CD4-positive, alpha-beta memory T cell (primary cell): ENCODE measurements at regions of chr18 and their contacts with region 1.

Region 1: GRCh38 chr18:51051105-51051712 is 21.2 kb downstream of the SMAD4 start:
- DNase-seq: peak; percentile 54 to 66 (median 59)
- H3K4me3 ChIP-seq: no peak overlapping the region
- H3K4me3 Mint-ChIP-seq: peak overlapping the region in 1 of 8 donors; percentile 36
- H3K27ac ChIP-seq: no peak overlapping the region
- H3K27ac Mint-ChIP-seq: peak overlapping the region in 6 of 7 donors; percentile 2 to 71 (median 52)
- H3K4me1 ChIP-seq: peaks cover 16% of the 10 kb centered on the region
- H3K4me1 Mint-ChIP-seq: peaks cover 21 to 36% (median 31%) of the 10 kb centered on the region in 4 donors
- H3K27me3 ChIP-seq: no peaks in the 10 kb centered on the region
- H3K27me3 Mint-ChIP-seq: no peaks in the 10 kb centered on the region

Region 2: DNA sequence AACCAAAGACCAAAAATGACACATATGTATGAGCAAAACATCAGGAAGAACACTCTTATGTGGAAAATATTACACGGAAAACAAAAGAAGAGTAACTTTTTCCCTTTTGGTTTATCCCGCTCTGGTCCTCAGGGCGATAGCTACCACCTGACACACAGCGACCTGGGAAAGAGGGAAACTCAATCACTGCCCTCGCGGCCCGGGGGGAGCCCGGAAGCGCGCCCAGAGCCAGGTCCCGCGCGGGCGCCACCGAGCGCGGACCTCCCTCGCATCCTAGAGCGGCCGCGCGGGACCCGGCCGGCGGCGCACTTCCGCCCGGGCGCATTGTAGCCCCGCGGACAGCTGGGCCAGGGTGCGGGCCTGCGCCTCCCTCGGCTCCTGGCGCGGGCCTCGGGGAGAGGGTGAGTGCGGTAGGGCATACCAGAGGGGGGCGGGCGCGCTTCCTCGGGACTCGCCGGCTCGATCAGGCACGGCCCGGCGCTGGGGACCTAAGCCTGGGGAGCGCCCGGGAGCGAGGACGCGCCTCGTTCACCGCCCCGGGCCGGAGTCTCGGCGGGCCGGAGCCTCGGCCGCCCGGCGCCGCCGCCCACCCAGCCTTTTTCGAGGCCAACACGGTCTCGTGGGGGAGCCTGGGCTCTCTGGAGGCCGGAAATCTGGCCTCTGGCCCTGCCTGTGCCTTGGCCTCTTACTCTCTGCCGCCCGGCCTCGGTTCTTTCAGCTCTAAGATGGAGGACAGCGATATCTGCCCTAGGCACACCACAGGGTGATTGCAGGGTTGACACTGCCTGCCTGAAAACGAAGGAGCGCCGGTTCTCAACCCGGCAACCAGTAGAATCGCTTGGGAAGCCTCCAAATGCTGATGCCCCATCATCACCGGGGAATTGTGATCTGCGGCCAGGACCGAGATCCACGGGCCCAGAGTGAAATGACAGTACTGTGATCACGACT is 83.2 kb before region 1 on chr18 and contains the start of gene ELAC1:
- CTCF ChIA-PET with region 1: interaction called, 4 read pairs
- POLR2A ChIA-PET with region 1: interaction called, 4 read pairs
- intact Hi-C with region 1: loop called (anchors 5 kb)
- DNase-seq: peak; percentile 67 to 76 (median 68)
- H3K4me3 ChIP-seq: peak within 1 kb of the TSS; percentile 77 to 88
- H3K4me3 Mint-ChIP-seq: peak within 1 kb of the TSS; percentile 95 to 99 (median 96)
- H3K27ac ChIP-seq: peak within 1 kb of the TSS; percentile 81
- H3K27ac Mint-ChIP-seq: peak within 1 kb of the TSS; percentile 90 to 98 (median 96)
- H3K4me1 ChIP-seq: peaks cover 25% of the 10 kb centered on the region
- H3K4me1 Mint-ChIP-seq: peaks cover 18 to 29% (median 21%) of the 10 kb centered on the region in 4 donors
- H3K27me3 ChIP-seq: no peaks in the 10 kb centered on the region
- H3K27me3 Mint-ChIP-seq: peaks cover 0 to 3% of the 10 kb centered on the region in 2 donors
- total RNA-seq, gene ELAC1: 11.6 to 11.7 TPM

Region 3: DNA sequence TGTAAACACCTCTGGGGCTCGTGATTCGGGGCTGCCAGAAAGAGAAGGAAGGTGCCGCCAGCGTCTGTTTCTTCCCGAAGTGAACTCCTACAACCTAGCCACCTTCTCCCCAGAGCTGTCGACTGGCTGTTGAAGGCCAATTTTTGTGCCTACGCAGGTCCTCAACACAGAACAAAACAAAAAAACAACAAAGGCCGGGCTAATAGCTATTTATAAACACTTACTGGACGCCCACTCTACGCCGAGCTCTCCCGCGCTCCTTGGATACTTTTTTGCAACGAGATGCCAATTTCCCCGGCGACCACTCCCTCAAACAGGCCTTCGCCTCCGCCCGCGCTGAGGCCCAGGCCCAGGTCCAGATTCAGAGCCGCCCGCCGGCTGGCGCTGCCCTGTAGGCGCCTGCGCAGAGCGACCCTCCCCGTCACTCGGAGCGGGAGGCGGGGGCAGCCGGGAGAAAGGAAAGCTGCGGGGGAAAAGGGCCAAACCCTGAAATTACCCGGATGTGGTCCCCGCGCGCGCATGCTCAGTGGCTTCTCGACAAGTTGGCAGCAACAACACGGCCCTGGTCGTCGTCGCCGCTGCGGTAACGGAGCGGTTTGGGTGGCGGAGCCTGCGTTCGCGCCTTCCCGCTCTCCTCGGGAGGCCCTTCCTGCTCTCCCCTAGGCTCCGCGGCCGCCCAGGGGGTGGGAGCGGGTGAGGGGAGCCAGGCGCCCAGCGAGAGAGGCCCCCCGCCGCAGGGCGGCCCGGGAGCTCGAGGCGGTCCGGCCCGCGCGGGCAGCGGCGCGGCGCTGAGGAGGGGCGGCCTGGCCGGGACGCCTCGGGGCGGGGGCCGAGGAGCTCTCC is 21.3 kb before region 1 on chr18 and contains the start of gene SMAD4:
- CTCF ChIA-PET with region 1: interaction called, 26 read pairs
- POLR2A ChIA-PET with region 1: interaction called, 9 read pairs
- intact Hi-C with region 1: loop called (anchors 1 kb)
- DNase-seq: peak; percentile 96 to 98 (median 97)
- H3K4me3 ChIP-seq: peak within 1 kb of the TSS; percentile 47 to 53
- H3K4me3 Mint-ChIP-seq: peak within 1 kb of the TSS; percentile 95 to 100 (median 98)
- H3K27ac ChIP-seq: peak within 1 kb of the TSS; percentile 83
- H3K27ac Mint-ChIP-seq: peak within 1 kb of the TSS; percentile 98 to 99 (median 99)
- H3K4me1 ChIP-seq: peaks cover 80% of the 10 kb centered on the region
- H3K4me1 Mint-ChIP-seq: peaks cover 39 to 63% (median 48%) of the 10 kb centered on the region in 4 donors
- H3K27me3 ChIP-seq: no peaks in the 10 kb centered on the region
- H3K27me3 Mint-ChIP-seq: no peaks in the 10 kb centered on the region
- total RNA-seq, gene SMAD4: 143 to 155 TPM

Region 4: DNA sequence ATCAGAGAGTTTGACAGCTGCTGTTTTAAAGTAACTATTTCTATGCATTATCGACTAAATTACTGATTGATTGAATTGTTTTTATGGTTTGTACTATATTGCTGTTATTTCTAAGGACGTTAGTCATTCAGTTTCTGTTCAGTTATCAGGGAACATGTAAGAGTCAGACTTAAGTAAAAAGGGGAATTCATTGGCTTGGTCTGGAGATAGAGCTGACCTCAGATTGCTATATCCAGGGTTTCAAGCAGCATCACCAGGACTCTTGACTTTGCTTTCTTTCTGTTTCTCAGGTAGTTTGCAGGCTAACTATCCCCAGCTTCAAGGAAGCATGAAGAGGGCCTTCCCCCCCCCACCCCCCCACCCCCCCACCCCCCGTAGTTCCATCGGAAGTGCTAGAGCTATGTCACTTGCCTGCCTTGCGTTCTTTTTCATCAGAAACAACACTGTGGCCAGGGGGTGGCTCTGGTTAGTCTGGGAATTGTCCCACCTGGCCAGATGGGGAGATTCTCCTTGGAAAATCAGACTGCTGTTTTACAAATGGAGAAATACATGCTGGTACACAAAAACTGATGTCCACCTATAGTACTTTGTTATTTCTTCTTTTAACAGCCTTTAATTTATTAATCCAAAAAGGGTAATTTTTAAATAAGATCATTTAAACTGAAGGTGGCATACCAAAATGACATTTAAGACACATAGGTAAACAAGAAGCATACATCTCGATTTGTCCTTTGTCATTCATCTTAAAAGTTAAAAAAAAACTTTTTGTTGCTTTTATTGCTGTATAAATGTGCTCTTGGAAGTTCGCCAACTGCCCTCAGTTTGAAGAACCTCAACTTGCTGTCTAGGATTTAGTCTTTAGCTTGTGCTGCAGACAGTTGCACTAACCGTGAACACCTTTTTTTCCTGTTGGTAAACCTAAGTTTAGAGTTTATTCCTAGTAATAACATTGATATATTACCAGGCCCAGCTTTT is 11.8 kb before region 1 on chr18:
- CTCF ChIA-PET with region 1: interaction called, 21 read pairs
- POLR2A ChIA-PET with region 1: interaction called, 5 read pairs
- intact Hi-C with region 1: no loop called
- DNase-seq: peak in 2 of 5 donors; percentile 13 to 36
- H3K4me3 ChIP-seq: no peak overlapping the region
- H3K4me3 Mint-ChIP-seq: peak overlapping the region in 6 of 8 donors; percentile 19 to 69 (median 56)
- H3K27ac ChIP-seq: no peak overlapping the region
- H3K27ac Mint-ChIP-seq: peak overlapping the region in 6 of 7 donors; percentile 6 to 68 (median 50)
- H3K4me1 ChIP-seq: peaks cover 92% of the 10 kb centered on the region
- H3K4me1 Mint-ChIP-seq: peaks cover 70 to 99% (median 84%) of the 10 kb centered on the region in 4 donors
- H3K27me3 ChIP-seq: no peaks in the 10 kb centered on the region
- H3K27me3 Mint-ChIP-seq: no peaks in the 10 kb centered on the region

Region 5: GRCh38 chr18:51064256-51064655 is 13.0 kb after region 1 on chr18:
- CTCF ChIA-PET with region 1: interaction called, 10 read pairs
- POLR2A ChIA-PET with region 1: no interaction called
- intact Hi-C with region 1: no loop called
- DNase-seq: no peak
- H3K4me3 ChIP-seq: no peak overlapping the region
- H3K4me3 Mint-ChIP-seq: no peak overlapping the region
- H3K27ac ChIP-seq: no peak overlapping the region
- H3K27ac Mint-ChIP-seq: peak overlapping the region in 2 of 7 donors; percentile 8 to 74
- H3K4me1 ChIP-seq: no peaks in the 10 kb centered on the region
- H3K4me1 Mint-ChIP-seq: peaks cover 0 to 15% (median 4%) of the 10 kb centered on the region in 4 donors
- H3K27me3 ChIP-seq: no peaks in the 10 kb centered on the region
- H3K27me3 Mint-ChIP-seq: no peaks in the 10 kb centered on the region